HepG2 (cell line): ENCODE measurements at regions of chr3 and their contacts with region 1.

Region 1: DNA sequence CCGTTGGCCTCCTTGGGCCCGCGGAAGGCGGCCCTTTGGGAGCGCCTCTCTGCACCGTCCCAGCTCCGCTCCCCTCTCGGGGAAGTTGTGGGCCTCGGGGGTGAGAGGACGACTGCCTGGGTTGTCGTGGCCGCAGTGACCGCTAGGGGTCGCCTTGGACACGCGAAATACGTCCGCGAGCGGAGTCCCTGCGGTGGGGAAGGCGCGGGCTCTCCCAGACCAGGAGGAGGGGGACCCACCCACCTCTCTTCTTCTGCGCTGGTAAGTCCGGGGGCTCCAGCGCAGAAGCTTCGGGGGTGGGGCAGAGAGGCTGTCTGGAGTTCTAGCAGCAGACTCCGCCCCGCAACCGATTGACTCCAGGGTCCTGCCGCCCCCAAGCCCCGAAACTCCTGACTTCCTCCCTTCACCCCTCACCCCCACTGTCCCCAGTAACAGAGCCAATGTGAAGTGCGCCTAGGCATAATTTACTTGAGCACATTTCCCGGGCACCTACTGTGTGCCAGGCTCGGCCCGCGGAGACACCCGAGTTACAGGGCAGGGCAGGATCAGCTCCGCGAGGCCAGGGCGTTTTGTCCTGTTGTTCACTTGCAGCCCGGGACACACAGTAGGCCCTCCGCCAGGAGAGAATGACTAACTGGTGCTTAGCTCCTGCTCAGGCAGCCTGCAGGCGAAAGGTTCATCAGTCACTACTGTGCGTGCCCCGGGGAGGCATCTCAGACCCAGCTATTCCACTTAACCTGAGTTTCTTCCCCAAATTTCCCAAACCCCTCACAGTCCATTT is 32.8 kb downstream of the DNASE1L3 start:
- DNase-seq: peak; percentile 67
- ATAC-seq: peak; percentile 44
- H3K4me3 ChIP-seq: peak overlapping the region in 1 of 3 experiments; percentile 57; a peak in 3 of 6 replicates
- H3K27ac ChIP-seq: peak overlapping the region; percentile 32
- H3K4me1 ChIP-seq: peaks cover 100% of the 10 kb centered on the region
- H3K27me3 ChIP-seq: peaks cover 0 to 16% of the 10 kb centered on the region in 2 experiments; a peak in 2 of 5 replicates
- CTCF ChIP-seq: peak; percentile 97
- EP300 ChIP-seq: no peak
- POLR2A ChIP-seq: no peak
- RAD21 ChIP-seq: peak; percentile 86

Region 2: DNA sequence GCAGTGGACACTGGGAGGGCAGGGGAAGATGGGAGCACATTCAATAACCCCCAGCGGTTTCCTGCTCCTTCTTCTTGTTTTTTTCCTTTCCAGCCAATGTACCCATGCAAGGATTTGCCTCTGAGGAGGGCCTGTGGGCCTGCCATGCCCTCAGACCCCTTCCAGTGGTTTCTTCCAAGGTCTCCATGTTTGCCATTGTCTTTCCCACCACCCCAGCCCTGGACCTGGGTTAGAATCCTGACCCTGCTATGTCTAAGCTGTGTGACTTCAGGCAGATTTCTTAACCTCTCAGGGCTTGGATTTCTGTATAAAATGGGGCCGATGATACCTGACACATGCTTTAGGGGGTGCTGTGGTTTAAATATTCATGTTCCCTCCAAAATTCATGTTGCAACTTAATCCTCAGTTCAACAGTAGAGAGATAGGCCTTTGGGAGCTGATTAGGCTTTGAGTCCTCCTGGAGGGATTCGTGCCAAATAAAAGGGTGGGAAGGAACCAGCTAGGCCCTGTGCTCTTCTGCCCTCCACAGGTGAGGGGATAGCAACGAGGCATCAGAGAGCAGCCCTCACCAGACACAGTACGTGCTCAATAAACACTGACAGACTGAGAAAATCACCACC is 216.0 kb before region 1 on chr3:
- CTCF ChIA-PET with region 1: no interaction called
- POLR2A ChIA-PET with region 1: no interaction called
- in situ Hi-C with region 1: no loop called
- intact Hi-C with region 1: loop called (anchors 1 kb)
- DNase-seq: peak; percentile 80
- ATAC-seq: peak; percentile 47
- H3K4me3 ChIP-seq: peak overlapping the region in 1 of 3 experiments; percentile 60; a peak in 2 of 6 replicates
- H3K27ac ChIP-seq: peak overlapping the region; percentile 74
- H3K4me1 ChIP-seq: peaks cover 59% of the 10 kb centered on the region
- H3K27me3 ChIP-seq: no peaks in the 10 kb centered on the region
- CTCF ChIP-seq: peak; percentile 70
- EP300 ChIP-seq: no peak
- POLR2A ChIP-seq: no peak
- RAD21 ChIP-seq: peak; percentile 78

Region 3: GRCh38 chr3:58008140-58009025 is 169.6 kb before region 1 on chr3 and contains the start of gene FLNB:
- CTCF ChIA-PET with region 1: no interaction called
- POLR2A ChIA-PET with region 1: interaction called, 16 read pairs
- in situ Hi-C with region 1: no loop called
- intact Hi-C with region 1: loop called (anchors 5 kb)
- DNase-seq: peak; percentile 45
- ATAC-seq: peak; percentile 77
- H3K4me3 ChIP-seq: peak within 1 kb of the TSS; percentile 93 to 100 (median 99)
- H3K27ac ChIP-seq: peak within 1 kb of the TSS; percentile 74
- H3K4me1 ChIP-seq: peaks cover 55% of the 10 kb centered on the region
- H3K27me3 ChIP-seq: no peaks in the 10 kb centered on the region; a peak in 1 of 5 replicates
- CTCF ChIP-seq: peak; percentile 86
- EP300 ChIP-seq: no peak
- POLR2A ChIP-seq: peak; percentile 92 to 98
- RAD21 ChIP-seq: peak; percentile 83
- total RNA-seq, gene FLNB: 48.8 and 130 TPM in 2 replicates

Region 4: GRCh38 chr3:58144478-58145325 is 33.2 kb before region 1 on chr3:
- CTCF ChIA-PET with region 1: no interaction called
- POLR2A ChIA-PET with region 1: no interaction called
- in situ Hi-C with region 1: no loop called
- intact Hi-C with region 1: loop called (anchors 1 kb)
- DNase-seq: peak; percentile 82
- ATAC-seq: peak; percentile 48
- H3K4me3 ChIP-seq: no peak overlapping the region
- H3K27ac ChIP-seq: peak overlapping the region; percentile 56
- H3K4me1 ChIP-seq: peaks cover 39% of the 10 kb centered on the region
- H3K27me3 ChIP-seq: no peaks in the 10 kb centered on the region
- CTCF ChIP-seq: no peak
- EP300 ChIP-seq: peak in 1 of 2 experiments; percentile 69; a peak in 1 of 4 replicates
- POLR2A ChIP-seq: no peak
- RAD21 ChIP-seq: no peak

Region 5: DNA sequence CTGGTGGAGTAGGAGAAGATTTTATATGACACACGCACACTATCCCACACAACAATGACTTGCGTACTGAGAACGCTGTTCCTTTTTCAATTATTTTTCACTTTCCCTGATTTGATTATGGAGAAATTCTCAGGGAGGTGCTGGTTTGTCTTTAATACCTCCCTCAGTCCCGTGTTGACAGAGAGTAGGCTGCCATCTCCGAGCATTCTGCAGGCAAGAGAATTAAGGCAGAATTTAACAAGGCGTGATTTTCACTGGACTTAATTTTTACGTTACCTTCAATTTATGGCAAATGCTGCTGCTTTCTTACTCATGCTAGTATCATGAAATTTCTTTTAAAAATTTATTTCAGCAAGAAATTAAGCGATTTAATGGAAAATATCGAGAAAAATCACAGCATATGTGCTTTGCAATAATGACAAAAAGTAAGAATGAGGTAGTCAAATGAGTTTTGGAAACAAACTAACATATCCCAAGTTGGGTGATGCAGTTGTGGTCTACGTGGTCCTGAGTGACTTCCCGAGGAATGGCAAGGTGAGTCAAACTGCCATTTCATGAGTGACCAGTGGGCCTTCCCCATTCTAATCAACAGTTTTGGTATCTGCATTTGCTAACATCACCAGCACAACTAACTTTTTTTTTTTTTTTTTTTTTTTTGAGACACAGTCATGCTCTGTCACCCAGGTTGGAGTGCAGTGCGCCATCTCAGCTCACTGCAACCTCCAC is 15.9 kb after region 1 on chr3:
- CTCF ChIA-PET with region 1: no interaction called
- POLR2A ChIA-PET with region 1: interaction called, 11 read pairs
- in situ Hi-C with region 1: no loop called
- intact Hi-C with region 1: no loop called
- DNase-seq: no peak
- ATAC-seq: peak; percentile 20
- H3K4me3 ChIP-seq: peak overlapping the region in 1 of 3 experiments; percentile 38; a peak in 1 of 6 replicates
- H3K27ac ChIP-seq: peak overlapping the region; percentile 84
- H3K4me1 ChIP-seq: peaks cover 89% of the 10 kb centered on the region
- H3K27me3 ChIP-seq: no peaks in the 10 kb centered on the region
- CTCF ChIP-seq: no peak
- EP300 ChIP-seq: no peak
- POLR2A ChIP-seq: no peak
- RAD21 ChIP-seq: no peak